Activated T-helper 1 cell treated with anti-CD3 and anti-CD28 coated beads, Interleukin-12 subunit alpha, Interleukin-12 subunit beta, Interleukin-2, Interleukin-4 antibody, amounts not matched to agents 30 ng/mL and 10 ng/mL and 1 ng/mL, durations not matched to agents 14 hours and 24 hours and 36 hours (primary cell): ENCODE measurements at regions of chr12 and their contacts with region 1.

Region 1: GRCh38 chr12:92145731-92146496 is at the start of gene BTG1:
- DNase-seq: peak; percentile 99
- H3K4me3 Mint-ChIP-seq: peak within 1 kb of the TSS; percentile 94
- H3K27ac Mint-ChIP-seq: peak within 1 kb of the TSS; percentile 97
- H3K4me1 Mint-ChIP-seq: peaks cover 51% of the 10 kb centered on the region
- H3K27me3 Mint-ChIP-seq: peaks cover 2% of the 10 kb centered on the region
- total RNA-seq, gene BTG1: 86.4 and 87.9 TPM in 2 replicates

Region 2: DNA sequence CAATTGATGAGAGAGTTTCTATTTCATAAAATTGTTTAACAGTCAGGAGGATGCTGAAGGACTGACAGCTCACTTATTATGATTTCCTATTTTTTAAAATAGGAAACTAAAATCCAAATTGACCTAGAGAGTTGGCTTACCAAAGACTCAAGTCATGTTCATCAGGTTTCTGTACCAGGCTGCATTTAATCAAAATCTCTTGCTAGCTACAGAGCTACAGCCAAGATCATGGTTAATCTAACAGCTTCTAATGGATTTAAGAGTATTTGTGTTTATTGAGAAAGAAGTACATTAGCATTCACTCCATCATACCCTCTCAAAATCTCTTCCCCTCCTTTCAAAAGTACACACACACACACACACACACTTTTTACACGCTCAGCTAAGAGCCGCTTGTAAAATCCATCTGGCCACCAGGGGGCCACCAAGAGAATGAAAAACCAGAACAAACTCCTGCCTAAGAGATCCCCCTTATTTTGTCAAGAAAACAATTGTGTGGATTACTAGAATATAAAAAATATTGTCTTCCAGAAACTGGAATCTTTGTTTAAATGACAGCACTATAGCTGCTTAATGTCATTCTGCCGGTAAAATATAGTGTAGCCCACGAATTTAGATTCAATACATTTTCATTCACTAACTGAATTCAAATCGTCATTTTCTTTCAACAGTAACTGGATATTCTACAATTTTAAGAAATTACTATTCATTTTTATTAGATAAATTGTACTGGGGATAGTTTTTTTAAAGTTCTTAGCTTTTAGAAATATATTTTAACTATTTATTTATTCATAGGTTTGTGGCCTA is 334.2 kb before region 1 on chr12:
- intact Hi-C with region 1: loop called (anchors 1 kb)
- DNase-seq: peak; percentile 35
- H3K4me3 Mint-ChIP-seq: no peak overlapping the region
- H3K27ac Mint-ChIP-seq: no peak overlapping the region
- H3K4me1 Mint-ChIP-seq: peaks cover 10% of the 10 kb centered on the region
- H3K27me3 Mint-ChIP-seq: no peaks in the 10 kb centered on the region

Region 3: GRCh38 chr12:92185052-92185451 is 39.1 kb after region 1 on chr12:
- intact Hi-C with region 1: loop called (anchors 1 kb)
- DNase-seq: peak; percentile 46
- H3K4me3 Mint-ChIP-seq: peak overlapping the region; percentile 19
- H3K27ac Mint-ChIP-seq: peak overlapping the region; percentile 70
- H3K4me1 Mint-ChIP-seq: peaks cover 63% of the 10 kb centered on the region
- H3K27me3 Mint-ChIP-seq: no peaks in the 10 kb centered on the region

Region 4: DNA sequence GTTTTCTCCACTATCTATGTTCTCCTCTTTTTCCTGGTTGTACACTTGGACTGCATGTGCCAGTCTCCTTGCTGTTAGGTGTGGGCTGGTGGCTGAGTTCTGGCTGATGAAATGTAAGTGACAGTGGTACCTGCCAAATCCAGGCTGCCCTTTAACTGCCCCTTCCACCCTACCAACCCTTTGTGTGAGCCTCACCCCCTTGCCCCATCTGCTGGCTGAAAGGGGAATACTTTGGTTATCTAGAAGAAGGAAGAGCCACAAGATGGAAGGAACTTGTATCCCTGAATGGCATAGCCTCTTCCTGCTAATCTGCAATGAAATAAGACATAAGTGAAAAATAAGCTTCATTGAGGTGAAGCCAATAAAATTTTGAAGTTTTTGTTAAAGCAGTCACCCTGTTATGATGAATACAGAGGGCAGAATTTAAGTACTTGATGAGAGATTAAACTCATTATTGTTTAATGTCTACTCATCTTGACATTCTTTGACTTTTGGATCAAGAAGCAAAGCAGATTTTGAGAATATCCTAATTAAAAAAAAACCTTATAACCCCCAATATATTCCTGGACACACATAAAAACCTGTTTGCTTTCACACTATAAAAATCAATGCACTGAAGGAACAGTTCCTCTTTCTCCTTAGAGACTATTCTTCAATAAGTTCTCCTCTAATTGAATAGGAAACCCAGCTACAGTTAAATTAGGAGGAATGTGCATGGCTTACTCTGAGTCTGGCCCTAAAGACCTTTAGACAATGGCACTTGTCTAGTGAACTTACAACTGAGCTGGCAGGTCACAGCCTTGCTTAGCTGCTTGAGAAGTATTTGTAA is 262.4 kb after region 1 on chr12:
- intact Hi-C with region 1: loop called (anchors 1 kb)
- DNase-seq: peak; percentile 37
- H3K4me3 Mint-ChIP-seq: no peak overlapping the region
- H3K27ac Mint-ChIP-seq: no peak overlapping the region
- H3K4me1 Mint-ChIP-seq: peaks cover 46% of the 10 kb centered on the region
- H3K27me3 Mint-ChIP-seq: no peaks in the 10 kb centered on the region

Region 5: DNA sequence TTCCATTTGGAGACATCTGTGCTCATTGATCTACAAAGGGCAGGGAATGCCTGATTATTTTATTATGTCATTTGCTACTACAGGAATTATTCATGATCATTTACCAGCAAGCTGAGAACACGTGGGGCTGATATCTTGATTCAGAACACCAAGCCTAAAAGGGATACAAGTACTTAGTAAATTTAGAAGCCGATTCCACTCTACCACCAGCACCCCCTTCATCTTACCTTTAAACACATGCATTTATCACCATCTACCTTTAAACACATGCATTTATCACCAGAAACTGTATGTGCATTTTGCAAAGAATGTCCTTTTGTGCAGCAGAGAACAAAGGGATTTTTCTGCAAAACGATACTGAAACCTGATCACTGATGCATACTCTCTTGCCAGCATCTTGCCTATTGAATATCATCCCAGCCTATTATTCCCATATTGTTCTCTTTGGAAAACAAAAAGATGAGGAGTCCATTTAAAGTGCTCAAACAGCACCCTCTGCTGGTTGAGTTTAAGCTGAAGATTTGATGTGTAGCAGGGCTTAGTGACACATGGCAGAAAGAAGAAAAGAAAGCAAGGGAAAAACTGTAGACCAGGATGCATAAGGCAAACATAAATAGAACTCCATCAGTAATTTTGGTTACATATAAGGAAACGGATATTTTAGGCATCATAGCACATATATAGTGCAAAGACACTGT is 424.3 kb after region 1 on chr12:
- intact Hi-C with region 1: loop called (anchors 1 kb)
- DNase-seq: peak; percentile 36
- H3K4me3 Mint-ChIP-seq: no peak overlapping the region
- H3K27ac Mint-ChIP-seq: no peak overlapping the region
- H3K4me1 Mint-ChIP-seq: peaks cover 49% of the 10 kb centered on the region
- H3K27me3 Mint-ChIP-seq: no peaks in the 10 kb centered on the region